Activated T-helper 2 cell treated with anti-CD3 and anti-CD28 coated beads, Interferon-gamma antibody, Interleukin-2, Interleukin-4, amounts not matched to agents 10 μg/mL and 5 μg/mL and 100 μg/mL, durations not matched to agents 14 hours and 24 hours and 36 hours (primary cell): ENCODE measurements at regions of chr1 and their contacts with region 1.

Region 1: GRCh38 chr1:153670859-153671627 is at the start of gene ILF2:
- DNase-seq: peak; percentile 97
- H3K4me3 Mint-ChIP-seq: no peak within 1 kb of the TSS
- H3K27ac Mint-ChIP-seq: no peak within 1 kb of the TSS
- H3K4me1 Mint-ChIP-seq: peaks cover 25% of the 10 kb centered on the region
- H3K27me3 Mint-ChIP-seq: no peaks in the 10 kb centered on the region
- total RNA-seq, gene ILF2: 352 and 358 TPM in 2 replicates

Region 2: DNA sequence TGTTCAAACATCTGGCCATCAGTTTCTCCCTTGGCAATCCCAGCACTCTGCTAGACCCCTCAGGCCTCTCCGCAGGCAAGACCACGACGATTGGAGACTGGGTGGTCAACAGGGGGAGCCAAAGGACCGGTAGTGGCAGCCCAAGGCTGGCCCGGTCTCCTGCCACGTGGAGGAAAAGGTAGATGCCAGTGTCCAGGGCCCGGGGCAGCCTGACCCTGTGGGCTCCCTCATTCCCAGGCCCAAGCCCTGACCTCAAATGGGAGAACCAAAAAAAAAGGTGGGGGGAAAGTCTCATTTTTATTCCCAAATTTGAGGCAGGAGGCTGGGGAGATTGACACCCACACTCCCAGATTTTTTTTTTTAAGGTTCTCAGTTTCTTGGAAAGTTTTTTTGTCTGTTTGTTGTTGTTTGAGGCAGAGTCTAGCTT is 160.0 kb before region 1 on chr1:
- intact Hi-C with region 1: loop called (anchors 5 kb)
- DNase-seq: peak; percentile 64
- H3K4me3 Mint-ChIP-seq: no peak overlapping the region
- H3K27ac Mint-ChIP-seq: peak overlapping the region; percentile 56
- H3K4me1 Mint-ChIP-seq: peaks cover 11% of the 10 kb centered on the region
- H3K27me3 Mint-ChIP-seq: no peaks in the 10 kb centered on the region

Region 3: DNA sequence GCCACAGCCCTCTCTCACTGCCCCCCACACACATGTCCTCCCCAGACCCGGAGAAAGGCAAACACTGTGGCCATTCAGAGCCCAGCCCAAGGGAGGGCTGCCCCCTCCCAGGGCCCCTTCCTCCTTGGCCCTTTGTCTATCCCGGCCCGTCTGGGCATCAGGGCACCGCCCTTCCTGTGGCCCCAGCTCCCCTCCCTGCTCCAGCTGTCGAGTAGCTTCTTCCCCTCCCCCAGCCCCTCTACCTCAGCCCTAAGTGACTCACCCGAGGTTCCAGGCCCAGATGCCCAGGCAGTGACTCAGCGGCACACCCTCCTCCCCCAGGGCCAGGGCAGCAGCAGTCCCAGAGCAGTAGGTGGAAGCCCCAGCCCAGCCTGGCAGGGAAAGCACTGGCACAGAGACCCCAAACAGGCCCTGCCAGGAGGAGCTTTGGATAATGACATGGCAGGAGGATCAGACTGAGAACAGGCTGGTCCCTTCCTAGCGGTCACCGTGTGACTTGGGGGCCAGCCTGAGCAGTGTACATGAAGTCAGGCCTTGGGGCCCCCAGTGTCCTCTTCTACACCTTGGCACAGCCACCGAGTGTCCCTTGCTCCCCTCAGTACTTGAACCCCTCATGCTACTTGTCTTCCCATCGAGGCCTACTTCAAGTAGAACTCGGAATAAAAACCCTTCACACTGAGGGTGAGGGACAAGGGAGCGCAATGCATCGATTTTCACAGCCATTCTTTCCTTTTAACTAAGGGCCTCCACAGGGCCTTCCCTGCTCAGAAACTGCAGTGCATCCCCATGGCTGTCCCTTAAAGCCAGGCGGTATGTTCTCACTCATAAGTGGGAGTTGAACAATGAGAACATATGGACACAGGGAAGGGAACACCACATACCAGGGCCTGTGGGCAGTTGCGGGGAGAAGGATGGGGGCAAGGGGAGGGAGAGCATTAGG is 104.3 kb before region 1 on chr1:
- intact Hi-C with region 1: loop called (anchors 2 kb)
- DNase-seq: peak; percentile 75
- H3K4me3 Mint-ChIP-seq: peak overlapping the region; percentile 22
- H3K27ac Mint-ChIP-seq: peak overlapping the region; percentile 100
- H3K4me1 Mint-ChIP-seq: peaks cover 37% of the 10 kb centered on the region
- H3K27me3 Mint-ChIP-seq: no peaks in the 10 kb centered on the region

Region 4: GRCh38 chr1:153658400-153659174 is 12.5 kb before region 1 on chr1 and contains the start of gene SNAPIN:
- intact Hi-C with region 1: loop called (anchors 1 kb)
- DNase-seq: peak; percentile 90
- H3K4me3 Mint-ChIP-seq: peak within 1 kb of the TSS; percentile 96
- H3K27ac Mint-ChIP-seq: peak within 1 kb of the TSS; percentile 70
- H3K4me1 Mint-ChIP-seq: peaks cover 12% of the 10 kb centered on the region
- H3K27me3 Mint-ChIP-seq: no peaks in the 10 kb centered on the region
- total RNA-seq, gene SNAPIN: 32.8 and 33.1 TPM in 2 replicates

Region 5: GRCh38 chr1:153698932-153699515 is 28.0 kb after region 1 on chr1:
- intact Hi-C with region 1: no loop called
- DNase-seq: no peak
- H3K4me3 Mint-ChIP-seq: no peak overlapping the region
- H3K27ac Mint-ChIP-seq: no peak overlapping the region
- H3K4me1 Mint-ChIP-seq: no peaks in the 10 kb centered on the region
- H3K27me3 Mint-ChIP-seq: no peaks in the 10 kb centered on the region

Region 6: GRCh38 chr1:153790966-153791647 is 120.1 kb after region 1 on chr1:
- intact Hi-C with region 1: loop called (anchors 1 kb)
- DNase-seq: peak; percentile 24
- H3K4me3 Mint-ChIP-seq: peak overlapping the region; percentile 52
- H3K27ac Mint-ChIP-seq: peak overlapping the region; percentile 93
- H3K4me1 Mint-ChIP-seq: peaks cover 31% of the 10 kb centered on the region
- H3K27me3 Mint-ChIP-seq: no peaks in the 10 kb centered on the region

Region 7: DNA sequence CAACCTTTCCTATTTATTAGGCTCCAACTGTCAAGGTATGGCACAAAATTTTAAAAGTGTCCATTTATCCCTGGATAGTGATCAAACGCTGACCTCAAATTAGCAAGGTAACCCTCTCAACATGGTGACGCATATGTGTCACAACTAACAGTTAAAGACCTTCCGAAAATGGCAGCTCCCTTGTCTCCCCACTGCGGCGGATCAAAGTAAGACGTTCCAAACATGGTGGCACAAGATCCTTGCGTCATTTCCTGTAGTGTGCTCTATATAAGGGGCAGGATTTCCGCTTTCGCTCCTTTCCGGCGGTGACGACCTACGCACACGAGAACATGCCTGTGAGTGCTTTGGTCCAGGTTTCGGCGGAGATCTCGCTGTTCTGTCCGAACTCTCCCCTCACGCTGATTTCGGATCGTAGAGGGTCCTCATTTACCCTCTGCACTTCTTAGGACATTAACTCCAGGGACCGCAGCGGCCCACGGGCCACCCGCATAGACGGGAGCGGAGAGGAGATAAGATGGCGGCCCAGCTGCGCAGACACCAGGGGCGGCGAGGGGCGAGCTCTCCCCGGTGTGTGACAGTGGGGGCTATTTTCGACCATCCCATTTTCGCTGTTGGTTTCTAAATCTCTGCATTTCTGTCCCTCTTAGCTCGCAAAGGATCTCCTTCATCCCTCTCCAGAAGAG is 319.6 kb after region 1 on chr1 and contains the start of gene RPS27:
- intact Hi-C with region 1: loop called (anchors 1 kb)
- DNase-seq: peak; percentile 88
- H3K4me3 Mint-ChIP-seq: peak within 1 kb of the TSS; percentile 88
- H3K27ac Mint-ChIP-seq: peak within 1 kb of the TSS; percentile 92
- H3K4me1 Mint-ChIP-seq: peaks cover 39% of the 10 kb centered on the region
- H3K27me3 Mint-ChIP-seq: no peaks in the 10 kb centered on the region
- total RNA-seq, gene RPS27: 1,296 and 1,372 TPM in 2 replicates

Region 8: GRCh38 chr1:154220071-154220969 is 549.3 kb after region 1 on chr1 and contains the start of gene UBAP2L:
- intact Hi-C with region 1: loop called (anchors 1 kb)
- DNase-seq: peak; percentile 99
- H3K4me3 Mint-ChIP-seq: peak within 1 kb of the TSS; percentile 93
- H3K27ac Mint-ChIP-seq: peak within 1 kb of the TSS; percentile 97
- H3K4me1 Mint-ChIP-seq: peaks cover 55% of the 10 kb centered on the region
- H3K27me3 Mint-ChIP-seq: no peaks in the 10 kb centered on the region
- total RNA-seq, gene UBAP2L: 259 and 263 TPM in 2 replicates